ENCODE measurements at regions of chr11 and their contacts with region 1.

Region 1: GRCh38 chr11:11022125-11022730 is 164.4 kb upstream of the ZBED5 start:
- DNase-seq: peak; percentile 12
- H3K4me3 ChIP-seq: no peak overlapping the region
- CTCF ChIP-seq: peak; percentile 17

Region 2: DNA sequence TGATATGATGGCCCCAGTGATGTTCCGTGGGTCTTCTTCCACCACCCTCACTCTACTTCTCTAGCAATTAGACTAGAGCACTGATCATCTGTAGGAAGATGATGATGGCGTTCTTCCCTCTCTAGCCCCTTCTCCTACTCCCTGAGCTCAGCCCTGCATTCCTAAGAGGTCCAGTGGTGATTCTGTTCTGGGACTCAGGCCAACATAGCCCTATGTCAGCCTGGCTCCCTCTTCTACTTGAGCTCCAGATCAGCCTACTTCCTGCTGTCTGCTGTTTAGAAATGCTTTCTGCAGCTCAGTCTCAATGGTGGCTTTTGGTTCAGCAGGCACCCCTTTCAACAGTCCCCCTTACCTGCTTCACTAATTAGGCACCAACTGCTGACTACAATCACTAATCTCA is 78.3 kb before region 1 on chr11:
- in situ Hi-C with region 1: loop called (anchors 5 kb)
- DNase-seq: peak; percentile 46
- H3K4me3 ChIP-seq: no peak overlapping the region
- CTCF ChIP-seq: no peak

Region 3: GRCh38 chr11:10973416-10973815 is 48.8 kb before region 1 on chr11:
- in situ Hi-C with region 1: no loop called
- DNase-seq: no peak
- H3K4me3 ChIP-seq: no peak overlapping the region
- CTCF ChIP-seq: no peak

Region 4: DNA sequence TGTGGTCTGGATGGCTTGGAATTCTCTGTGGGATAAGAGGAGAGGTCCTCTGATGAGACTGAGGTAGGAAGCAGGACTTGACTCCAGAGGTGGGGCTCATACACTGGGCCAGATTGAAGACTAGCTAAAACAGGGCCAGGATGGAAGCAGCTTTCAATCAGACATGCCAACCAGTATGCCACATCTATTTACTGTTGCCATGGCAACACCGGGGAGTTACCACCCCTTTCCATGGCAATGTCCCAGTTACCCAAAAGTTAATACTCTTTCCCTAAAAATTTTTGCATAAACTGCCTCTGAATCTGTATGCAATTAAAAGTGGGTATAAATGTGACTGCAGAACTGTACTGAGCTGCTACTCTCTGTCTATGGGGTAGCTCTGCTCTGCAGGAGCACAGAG is 83.1 kb after region 1 on chr11:
- in situ Hi-C with region 1: no loop called
- DNase-seq: no peak
- H3K4me3 ChIP-seq: no peak overlapping the region
- CTCF ChIP-seq: no peak

Region 5: GRCh38 chr11:11117730-11118129 is 95.5 kb after region 1 on chr11:
- in situ Hi-C with region 1: no loop called
- DNase-seq: no peak
- H3K4me3 ChIP-seq: no peak overlapping the region
- CTCF ChIP-seq: no peak